ENCODE measurements at regions of chr7 and their contacts with region 1.

Region 1: DNA sequence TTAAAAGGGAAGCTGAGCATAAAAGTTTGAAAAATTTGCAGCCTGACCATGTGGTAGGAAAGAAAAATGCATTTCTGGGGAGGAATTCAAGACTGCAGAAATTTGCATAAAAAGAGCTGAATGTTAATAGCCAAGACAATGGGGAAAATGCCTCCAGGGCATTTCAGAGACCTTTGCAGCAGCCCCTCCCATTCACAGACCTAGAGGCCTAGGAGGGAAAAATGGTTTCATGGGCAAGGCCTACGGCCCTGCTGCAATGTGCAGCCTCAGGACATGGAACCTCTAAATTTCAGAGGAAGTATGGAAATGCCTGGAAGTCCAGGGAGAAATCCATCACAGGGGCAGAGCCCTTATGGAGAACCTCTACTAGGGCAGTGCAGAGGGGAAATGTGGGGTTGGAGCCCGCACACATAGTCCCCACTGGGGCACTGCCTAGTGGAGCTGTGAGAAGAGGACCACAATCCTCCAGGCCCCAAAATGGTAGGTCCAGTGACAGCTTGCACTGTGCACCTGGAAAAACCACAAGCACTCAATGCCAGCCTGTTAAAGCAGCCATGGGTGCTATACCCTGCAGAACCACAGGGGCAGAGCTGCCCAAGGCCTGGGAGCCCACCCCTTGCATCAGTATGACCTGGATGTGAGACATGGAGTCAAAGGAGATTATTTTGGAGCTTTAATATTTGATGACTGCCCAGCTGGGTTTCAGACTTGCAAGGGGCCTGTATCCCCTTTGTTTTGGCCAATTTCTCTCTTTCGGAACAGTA is 243.8 kb downstream of the DNAJB9 start:
- DNase-seq: peak; percentile 1
- H3K4me3 Mint-ChIP-seq: no peak overlapping the region
- H3K27ac Mint-ChIP-seq: no peak overlapping the region
- H3K4me1 Mint-ChIP-seq: no peaks in the 10 kb centered on the region
- H3K27me3 Mint-ChIP-seq: peaks cover 10% of the 10 kb centered on the region
- CTCF ChIP-seq: no peak

Region 2: GRCh38 chr7:108613112-108613759 is 200.2 kb before region 1 on chr7:
- CTCF ChIA-PET with region 1: no interaction called
- intact Hi-C with region 1: loop called (anchors 5 kb)
- DNase-seq: no peak
- H3K4me3 Mint-ChIP-seq: no peak overlapping the region
- H3K27ac Mint-ChIP-seq: no peak overlapping the region
- H3K4me1 Mint-ChIP-seq: no peaks in the 10 kb centered on the region
- H3K27me3 Mint-ChIP-seq: peaks cover 13% of the 10 kb centered on the region
- CTCF ChIP-seq: peak; percentile 45

Region 3: DNA sequence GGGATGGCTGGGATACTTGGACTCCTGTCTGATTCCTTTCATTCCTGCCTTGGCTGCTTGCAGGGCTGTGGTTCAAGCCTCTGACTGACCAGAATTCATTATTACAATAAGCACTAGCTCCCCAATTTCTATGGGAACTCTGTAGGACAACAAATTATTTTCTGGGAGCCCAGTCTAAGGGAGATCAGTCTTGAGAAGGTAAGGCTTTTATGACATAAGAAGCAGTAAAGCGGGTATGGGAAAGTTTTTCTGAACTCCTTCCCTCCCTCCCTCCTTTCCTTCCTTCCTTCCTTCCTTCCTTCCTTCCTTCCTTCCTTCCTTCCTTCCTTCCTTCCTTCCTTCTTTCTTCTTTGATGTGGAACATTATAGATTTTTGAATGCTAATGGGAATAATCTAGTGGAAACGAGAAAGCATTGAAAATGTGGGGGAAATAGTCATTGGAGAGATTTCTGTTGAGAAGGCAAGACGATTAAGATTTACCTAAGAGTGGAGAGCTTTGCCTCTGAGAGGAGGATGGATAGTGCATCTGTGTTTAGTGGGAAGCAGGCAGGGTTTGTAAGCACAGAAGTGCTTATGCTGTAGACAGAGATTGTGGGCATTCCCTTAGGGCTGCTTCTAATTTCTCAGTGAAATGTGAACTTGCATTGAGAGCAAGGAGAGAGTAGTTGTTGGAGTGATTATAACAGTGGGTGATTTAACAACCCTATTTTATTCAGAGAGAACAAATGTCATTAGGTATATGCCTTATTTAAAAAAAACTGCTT is 42.3 kb before region 1 on chr7:
- CTCF ChIA-PET with region 1: no interaction called
- intact Hi-C with region 1: no loop called
- DNase-seq: no peak
- H3K4me3 Mint-ChIP-seq: no peak overlapping the region
- H3K27ac Mint-ChIP-seq: no peak overlapping the region
- H3K4me1 Mint-ChIP-seq: no peaks in the 10 kb centered on the region
- H3K27me3 Mint-ChIP-seq: no peaks in the 10 kb centered on the region
- CTCF ChIP-seq: no peak

Measured in Calu3 (cell line).